Mammary epithelial cell (primary cell): ENCODE measurements at regions of chr6 and their contacts with region 1.

Region 1: DNA sequence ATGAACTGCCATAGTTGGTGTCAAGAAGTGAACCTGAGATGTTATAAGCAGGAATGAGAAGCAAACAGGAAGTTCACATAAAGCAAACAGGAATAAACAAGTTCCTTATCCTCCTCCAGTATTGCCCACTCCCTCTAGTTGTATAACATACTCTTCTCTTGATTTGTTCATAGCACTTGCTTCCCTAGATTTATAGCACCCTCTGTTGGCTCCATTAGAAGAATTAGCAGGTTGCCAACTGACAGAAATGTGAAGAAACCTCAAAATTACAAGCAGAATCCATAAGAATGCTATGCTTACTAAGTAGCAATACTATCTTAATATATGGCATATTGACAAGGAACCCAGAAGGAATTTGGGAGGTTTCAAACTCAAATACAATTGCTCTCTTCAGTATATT is 195.4 kb downstream of the TBX18 start:
- DNase-seq: peak; percentile 14
- H3K4me3 ChIP-seq: no peak overlapping the region
- H3K27ac ChIP-seq: no peak overlapping the region
- H3K4me1 ChIP-seq: no peaks in the 10 kb centered on the region
- H3K27me3 ChIP-seq: no peaks in the 10 kb centered on the region
- CTCF ChIP-seq: peak in 1 of 2 donors; percentile 45

Region 2: DNA sequence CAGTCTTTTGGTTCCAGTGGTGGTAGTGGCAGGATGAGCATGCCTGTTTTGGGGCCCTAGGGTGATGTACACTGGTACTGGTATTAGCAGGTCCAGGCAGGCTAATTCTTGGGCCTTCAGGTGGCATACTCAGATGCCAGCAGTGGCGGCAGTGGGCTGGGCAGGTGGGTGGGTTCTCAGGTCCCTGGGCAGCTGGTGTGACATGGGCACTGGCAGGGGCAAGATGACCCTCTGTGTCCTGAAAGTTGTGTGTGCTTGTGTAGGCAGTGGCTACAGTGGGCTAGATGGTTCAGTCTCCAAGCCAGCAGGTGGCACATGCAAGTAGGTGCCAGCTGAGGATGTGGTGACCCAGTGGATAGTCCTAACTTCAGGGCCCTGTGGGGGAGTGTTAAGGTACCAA is 188.3 kb before region 1 on chr6:
- CTCF ChIA-PET with region 1: no interaction called
- dilution Hi-C with region 1: no loop called
- in situ Hi-C with region 1: no loop called
- intact Hi-C with region 1: no loop called
- DNase-seq: no peak
- H3K4me3 ChIP-seq: no peak overlapping the region
- H3K27ac ChIP-seq: no peak overlapping the region
- H3K4me1 ChIP-seq: no peaks in the 10 kb centered on the region
- H3K27me3 ChIP-seq: no peaks in the 10 kb centered on the region
- CTCF ChIP-seq: no peak

Region 3: GRCh38 chr6:84597238-84597875 is 28.4 kb after region 1 on chr6:
- CTCF ChIA-PET with region 1: no interaction called
- dilution Hi-C with region 1: no loop called
- in situ Hi-C with region 1: no loop called
- intact Hi-C with region 1: no loop called
- DNase-seq: no peak
- H3K4me3 ChIP-seq: no peak overlapping the region
- H3K27ac ChIP-seq: no peak overlapping the region
- H3K4me1 ChIP-seq: peaks cover 5% of the 10 kb centered on the region
- H3K27me3 ChIP-seq: no peaks in the 10 kb centered on the region
- CTCF ChIP-seq: no peak

Region 4: DNA sequence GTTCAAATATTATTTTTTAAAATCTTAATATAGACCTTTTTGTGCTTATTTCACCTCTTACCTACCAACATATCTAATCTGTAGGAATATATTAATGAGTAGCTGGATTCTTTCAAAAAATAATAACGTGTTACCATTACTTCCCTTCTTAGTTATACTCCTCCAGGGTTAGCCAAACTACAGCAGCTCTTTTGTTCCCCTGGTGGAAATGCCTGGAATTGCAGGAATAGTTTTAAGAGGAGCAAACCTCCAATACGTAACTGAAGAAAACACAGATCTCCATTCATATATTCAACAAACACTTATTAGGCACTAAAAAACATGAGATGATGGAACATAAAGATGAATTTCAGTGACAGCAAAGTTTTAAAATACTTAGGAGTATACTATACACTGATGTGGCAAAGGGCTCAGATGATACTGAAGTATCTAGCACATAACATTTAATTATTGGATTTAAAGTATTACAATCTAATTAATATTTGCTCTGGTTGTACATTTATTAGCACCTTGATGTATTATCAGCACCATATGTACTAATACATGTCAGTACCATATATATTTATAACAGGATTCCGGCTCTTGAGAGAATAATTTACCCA is 117.1 kb after region 1 on chr6:
- CTCF ChIA-PET with region 1: no interaction called
- dilution Hi-C with region 1: no loop called
- in situ Hi-C with region 1: no loop called
- intact Hi-C with region 1: loop called (anchors 10 kb)
- DNase-seq: peak; percentile 6
- H3K4me3 ChIP-seq: no peak overlapping the region
- H3K27ac ChIP-seq: no peak overlapping the region
- H3K4me1 ChIP-seq: no peaks in the 10 kb centered on the region
- H3K27me3 ChIP-seq: no peaks in the 10 kb centered on the region
- CTCF ChIP-seq: peak; percentile 57 to 61